GM13977 (cell line): ENCODE measurements at regions of chr3 and their contacts with region 1.

Region 1: DNA sequence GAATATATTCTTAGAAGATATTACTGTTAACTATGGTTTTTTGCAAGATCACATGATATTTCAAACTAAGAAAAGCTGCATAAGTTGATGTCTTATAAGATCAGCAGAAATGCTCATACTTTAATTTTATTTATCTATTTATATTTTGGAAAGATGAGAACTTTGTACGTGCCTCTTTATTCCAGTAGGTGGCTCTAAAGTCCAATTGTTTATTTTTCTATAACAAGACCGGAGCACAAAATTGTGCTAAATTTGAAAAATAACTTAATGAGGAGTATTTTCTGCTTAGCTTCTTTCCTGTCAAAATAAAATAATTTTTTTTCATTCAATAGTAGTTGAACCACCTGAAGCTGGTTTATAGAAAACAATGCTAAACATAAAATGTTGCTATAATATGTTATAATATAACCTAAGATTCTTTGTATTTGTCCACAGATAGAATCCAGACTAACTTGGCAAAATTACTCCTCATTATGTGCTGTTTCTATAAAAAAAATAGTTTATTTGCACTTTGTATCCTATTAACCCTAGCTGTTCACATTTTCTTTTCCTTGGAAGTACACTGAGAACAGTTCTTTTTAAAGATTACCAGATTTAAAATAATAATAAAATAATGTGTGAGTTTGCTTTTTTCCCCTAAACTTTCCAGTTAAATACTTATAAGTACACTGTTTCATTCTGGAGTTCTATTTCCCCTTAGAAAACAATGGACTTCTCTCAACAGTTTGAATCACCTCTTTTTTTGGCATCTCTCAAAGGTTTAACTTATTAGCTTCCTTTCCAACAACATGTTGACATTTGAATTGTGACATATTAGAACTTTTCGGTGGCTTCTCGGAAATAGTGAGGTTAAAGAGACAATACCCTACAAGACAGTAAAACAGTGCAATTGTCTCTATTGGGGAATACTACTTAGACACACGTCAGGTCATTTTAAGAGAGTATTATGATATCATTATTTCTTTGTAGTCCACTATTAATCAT is 530.0 kb downstream of the MECOM start:
- DNase-seq: no peak
- CTCF ChIP-seq: peak; percentile 22

Region 2: GRCh38 chr3:169668957-169669681 is 535.6 kb after region 1 on chr3:
- in situ Hi-C with region 1: loop called (anchors 10 kb)
- DNase-seq: peak; percentile 83
- CTCF ChIP-seq: peak; percentile 93